ENCODE measurements at regions of chr12 and their contacts with region 1.

Region 1: DNA sequence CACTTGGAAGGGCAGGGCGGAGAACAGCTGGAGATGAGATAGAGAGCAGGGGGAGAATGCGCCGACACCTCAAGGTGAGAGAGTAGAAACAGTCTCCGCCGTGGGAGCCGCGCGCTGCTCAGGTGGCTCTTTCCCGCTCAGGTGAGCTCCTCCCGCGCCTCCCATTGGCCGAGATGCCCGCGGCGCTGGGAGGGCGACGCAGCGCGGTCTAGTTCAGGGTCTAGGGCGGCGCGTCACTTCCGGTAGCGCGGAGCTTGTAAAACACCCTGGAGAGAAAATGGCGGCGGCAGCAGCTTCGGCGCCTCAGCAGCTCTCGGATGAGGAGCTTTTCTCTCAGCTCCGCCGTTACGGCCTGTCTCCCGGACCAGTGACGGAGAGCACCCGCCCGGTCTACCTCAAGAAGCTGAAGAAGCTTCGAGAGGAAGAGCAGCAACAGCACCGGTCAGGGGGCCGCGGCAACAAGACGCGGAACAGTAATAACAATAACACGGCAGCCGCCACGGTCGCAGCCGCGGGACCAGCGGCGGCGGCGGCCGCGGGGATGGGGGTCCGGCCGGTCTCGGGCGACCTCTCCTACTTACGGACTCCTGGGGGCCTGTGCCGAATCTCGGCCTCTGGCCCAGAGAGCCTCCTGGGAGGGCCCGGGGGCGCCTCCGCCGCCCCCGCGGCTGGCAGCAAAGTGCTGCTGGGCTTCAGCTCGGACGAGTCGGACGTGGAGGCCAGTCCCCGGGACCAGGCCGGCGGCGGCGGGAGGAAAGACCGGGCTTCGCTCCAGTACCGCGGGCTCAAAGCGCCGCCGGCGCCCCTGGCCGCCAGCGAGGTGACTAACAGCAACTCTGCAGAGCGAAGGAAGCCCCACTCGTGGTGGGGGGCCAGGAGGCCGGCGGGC is at the start of gene LEMD3:
- DNase-seq: peak; percentile 94
- ATAC-seq: peak; percentile 92
- H3K4me3 Mint-ChIP-seq: peak within 1 kb of the TSS; percentile 95
- H3K27ac Mint-ChIP-seq: peak within 1 kb of the TSS; percentile 98
- H3K4me1 Mint-ChIP-seq: peaks cover 27% of the 10 kb centered on the region
- H3K27me3 Mint-ChIP-seq: peaks cover 2% of the 10 kb centered on the region
- total RNA-seq, gene LEMD3: 46.0 to 49.6 TPM

Region 2: GRCh38 chr12:65156366-65156841 is 13.2 kb before region 1 on chr12:
- POLR2A ChIA-PET with region 1: interaction called, 33 read pairs
- DNase-seq: no peak
- ATAC-seq: peak; percentile 80
- H3K4me3 Mint-ChIP-seq: peak overlapping the region; percentile 62
- H3K27ac Mint-ChIP-seq: peak overlapping the region; percentile 76
- H3K4me1 Mint-ChIP-seq: peaks cover 14% of the 10 kb centered on the region
- H3K27me3 Mint-ChIP-seq: peaks cover 11% of the 10 kb centered on the region

Region 3: GRCh38 chr12:65182012-65182739 is 12.6 kb after region 1 on chr12:
- POLR2A ChIA-PET with region 1: interaction called, 28 read pairs
- DNase-seq: no peak
- ATAC-seq: no peak
- H3K4me3 Mint-ChIP-seq: no peak overlapping the region
- H3K27ac Mint-ChIP-seq: no peak overlapping the region
- H3K4me1 Mint-ChIP-seq: peaks cover 43% of the 10 kb centered on the region
- H3K27me3 Mint-ChIP-seq: no peaks in the 10 kb centered on the region

Region 4: GRCh38 chr12:65192963-65193516 is 23.5 kb after region 1 on chr12:
- POLR2A ChIA-PET with region 1: interaction called, 16 read pairs
- DNase-seq: no peak
- ATAC-seq: no peak
- H3K4me3 Mint-ChIP-seq: peak overlapping the region; percentile 33
- H3K27ac Mint-ChIP-seq: no peak overlapping the region
- H3K4me1 Mint-ChIP-seq: peaks cover 62% of the 10 kb centered on the region
- H3K27me3 Mint-ChIP-seq: no peaks in the 10 kb centered on the region

Region 5: GRCh38 chr12:65209655-65210043 is 40.1 kb after region 1 on chr12:
- POLR2A ChIA-PET with region 1: interaction called, 20 read pairs
- DNase-seq: no peak
- ATAC-seq: peak; percentile 58
- H3K4me3 Mint-ChIP-seq: peak overlapping the region; percentile 87
- H3K27ac Mint-ChIP-seq: peak overlapping the region; percentile 90
- H3K4me1 Mint-ChIP-seq: peaks cover 30% of the 10 kb centered on the region
- H3K27me3 Mint-ChIP-seq: no peaks in the 10 kb centered on the region

Region 6: DNA sequence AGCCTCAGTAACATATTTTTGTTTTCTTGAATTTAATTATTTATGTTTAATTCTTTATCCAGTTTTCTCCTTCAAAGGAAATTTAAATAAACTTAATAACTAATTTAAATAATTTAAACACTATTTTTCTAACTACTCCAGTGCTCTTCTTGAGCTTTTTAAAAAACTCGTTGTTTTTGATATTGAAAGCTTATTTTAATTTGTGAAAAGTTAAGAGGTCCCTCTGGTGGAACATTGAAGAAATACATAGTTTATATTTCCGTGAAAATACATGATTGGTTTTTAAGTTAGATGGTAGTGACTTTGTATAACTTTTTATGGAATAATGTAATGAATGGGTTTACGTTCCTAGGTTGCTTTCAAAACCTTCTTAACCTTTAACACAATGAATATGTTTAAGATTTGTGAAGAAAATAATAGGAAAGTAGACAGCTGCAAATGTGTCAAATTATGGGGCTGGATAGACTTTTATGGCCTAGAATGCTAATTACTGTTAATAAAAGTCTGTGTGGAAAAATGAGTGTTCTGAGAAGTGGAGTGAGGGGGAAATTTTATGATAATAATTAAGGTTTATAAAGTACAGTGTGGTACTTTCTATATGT is 63.0 kb after region 1 on chr12:
- POLR2A ChIA-PET with region 1: interaction called, 20 read pairs
- DNase-seq: no peak
- ATAC-seq: no peak
- H3K4me3 Mint-ChIP-seq: no peak overlapping the region
- H3K27ac Mint-ChIP-seq: no peak overlapping the region
- H3K4me1 Mint-ChIP-seq: peaks cover 9% of the 10 kb centered on the region
- H3K27me3 Mint-ChIP-seq: no peaks in the 10 kb centered on the region

Region 7: GRCh38 chr12:65306366-65307168 is 137.0 kb after region 1 on chr12:
- POLR2A ChIA-PET with region 1: no interaction called
- DNase-seq: no peak
- ATAC-seq: no peak
- H3K4me3 Mint-ChIP-seq: no peak overlapping the region
- H3K27ac Mint-ChIP-seq: no peak overlapping the region
- H3K4me1 Mint-ChIP-seq: no peaks in the 10 kb centered on the region
- H3K27me3 Mint-ChIP-seq: peaks cover 14% of the 10 kb centered on the region

Measured in activated naive CD8-positive, alpha-beta T cell treated with anti-CD3 and anti-CD28 coated beads, Interleukin-2, amount 10 ng/mL, durations not matched to agents 7 days and 5 days (primary cell).